ENCODE measurements at regions of chr19 and their contacts with region 1.

Region 1: DNA sequence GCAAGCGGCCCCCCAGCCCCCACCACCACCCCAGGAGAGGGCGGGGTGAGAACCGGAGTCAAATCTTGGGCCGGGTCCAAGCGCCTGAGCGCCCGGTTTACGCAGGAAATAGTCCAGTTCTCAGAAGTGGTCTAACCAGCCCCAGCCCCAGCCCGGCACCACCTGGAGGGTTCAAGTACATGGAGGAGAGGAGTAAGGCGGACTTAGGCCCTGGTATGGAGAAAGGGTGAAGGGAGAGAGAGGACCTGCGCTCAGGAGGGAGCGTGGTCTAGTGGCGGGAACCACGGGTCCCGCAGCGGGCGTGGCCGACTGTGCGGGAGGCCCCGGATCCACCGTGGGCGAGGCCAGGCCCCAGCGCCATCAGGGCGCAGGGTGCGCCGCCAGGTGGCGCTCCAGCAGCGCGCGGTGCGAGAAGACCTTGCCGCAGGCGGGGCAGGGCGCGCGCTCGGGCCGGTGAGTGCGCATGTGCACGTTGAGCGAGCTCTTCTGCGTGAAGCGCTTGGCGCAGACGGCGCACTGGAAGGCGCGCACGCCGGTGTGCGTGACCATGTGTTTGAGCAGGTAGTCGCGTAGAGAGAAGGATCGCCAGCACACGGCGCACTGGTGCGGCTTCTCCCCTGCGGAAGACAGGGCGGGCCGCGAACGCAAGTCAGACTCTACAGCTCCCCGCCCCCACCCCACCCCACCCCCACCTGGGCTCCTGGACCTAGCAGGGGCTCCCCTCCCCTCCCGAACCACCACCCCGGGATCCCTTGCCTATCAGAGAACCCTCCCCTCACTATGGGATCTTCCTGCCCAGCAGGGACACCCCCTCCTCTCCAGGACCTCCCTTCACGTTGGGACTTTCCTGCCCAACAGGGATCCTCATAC is 2.1 kb upstream of the SLC27A5 start:
- DNase-seq: peak; percentile 97
- ATAC-seq: peak; percentile 96
- H3K4me3 Mint-ChIP-seq: peak overlapping the region; percentile 78
- H3K27ac Mint-ChIP-seq: peak overlapping the region; percentile 88
- H3K4me1 Mint-ChIP-seq: peaks cover 45% of the 10 kb centered on the region
- H3K27me3 Mint-ChIP-seq: no peaks in the 10 kb centered on the region

Region 2: DNA sequence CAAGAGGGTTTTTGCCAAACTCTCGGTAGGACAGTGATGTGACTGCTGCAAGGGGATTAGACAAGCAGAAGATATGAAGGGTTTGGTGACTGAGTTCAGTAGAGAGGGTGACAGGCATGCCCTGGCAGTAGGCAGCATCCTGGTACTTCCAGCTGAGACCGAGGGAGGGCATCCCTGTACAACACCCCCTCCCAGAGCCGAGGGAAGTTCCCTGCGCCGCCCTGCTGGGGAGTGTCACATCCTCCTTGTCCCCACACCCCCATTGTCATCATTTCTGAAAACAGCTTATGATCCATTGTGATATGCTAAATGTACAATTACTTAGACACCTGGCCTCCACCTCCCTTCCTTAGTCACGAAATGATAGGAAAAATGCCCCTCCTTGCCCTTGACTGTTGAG is 270.6 kb before region 1 on chr19:
- CTCF ChIA-PET with region 1: no interaction called
- POLR2A ChIA-PET with region 1: no interaction called
- DNase-seq: no peak
- ATAC-seq: no peak
- H3K4me3 Mint-ChIP-seq: no peak overlapping the region
- H3K27ac Mint-ChIP-seq: no peak overlapping the region
- H3K4me1 Mint-ChIP-seq: no peaks in the 10 kb centered on the region
- H3K27me3 Mint-ChIP-seq: no peaks in the 10 kb centered on the region

Region 3: GRCh38 chr19:58380037-58380721 is 133.8 kb before region 1 on chr19:
- CTCF ChIA-PET with region 1: no interaction called
- POLR2A ChIA-PET with region 1: no interaction called
- DNase-seq: no peak
- ATAC-seq: no peak
- H3K4me3 Mint-ChIP-seq: peak overlapping the region; percentile 82
- H3K27ac Mint-ChIP-seq: peak overlapping the region; percentile 94
- H3K4me1 Mint-ChIP-seq: peaks cover 32% of the 10 kb centered on the region
- H3K27me3 Mint-ChIP-seq: no peaks in the 10 kb centered on the region

Region 4: GRCh38 chr19:58475714-58476497 is 38.0 kb before region 1 on chr19 and contains the start of gene ZNF446:
- CTCF ChIA-PET with region 1: interaction called, 12 read pairs
- POLR2A ChIA-PET with region 1: interaction called, 4 read pairs
- DNase-seq: peak; percentile 99
- ATAC-seq: peak; percentile 92
- H3K4me3 Mint-ChIP-seq: peak within 1 kb of the TSS; percentile 91
- H3K27ac Mint-ChIP-seq: peak within 1 kb of the TSS; percentile 100
- H3K4me1 Mint-ChIP-seq: peaks cover 26% of the 10 kb centered on the region
- H3K27me3 Mint-ChIP-seq: no peaks in the 10 kb centered on the region
- total RNA-seq, gene ZNF446: 6.9 to 7.8 TPM

Region 5: DNA sequence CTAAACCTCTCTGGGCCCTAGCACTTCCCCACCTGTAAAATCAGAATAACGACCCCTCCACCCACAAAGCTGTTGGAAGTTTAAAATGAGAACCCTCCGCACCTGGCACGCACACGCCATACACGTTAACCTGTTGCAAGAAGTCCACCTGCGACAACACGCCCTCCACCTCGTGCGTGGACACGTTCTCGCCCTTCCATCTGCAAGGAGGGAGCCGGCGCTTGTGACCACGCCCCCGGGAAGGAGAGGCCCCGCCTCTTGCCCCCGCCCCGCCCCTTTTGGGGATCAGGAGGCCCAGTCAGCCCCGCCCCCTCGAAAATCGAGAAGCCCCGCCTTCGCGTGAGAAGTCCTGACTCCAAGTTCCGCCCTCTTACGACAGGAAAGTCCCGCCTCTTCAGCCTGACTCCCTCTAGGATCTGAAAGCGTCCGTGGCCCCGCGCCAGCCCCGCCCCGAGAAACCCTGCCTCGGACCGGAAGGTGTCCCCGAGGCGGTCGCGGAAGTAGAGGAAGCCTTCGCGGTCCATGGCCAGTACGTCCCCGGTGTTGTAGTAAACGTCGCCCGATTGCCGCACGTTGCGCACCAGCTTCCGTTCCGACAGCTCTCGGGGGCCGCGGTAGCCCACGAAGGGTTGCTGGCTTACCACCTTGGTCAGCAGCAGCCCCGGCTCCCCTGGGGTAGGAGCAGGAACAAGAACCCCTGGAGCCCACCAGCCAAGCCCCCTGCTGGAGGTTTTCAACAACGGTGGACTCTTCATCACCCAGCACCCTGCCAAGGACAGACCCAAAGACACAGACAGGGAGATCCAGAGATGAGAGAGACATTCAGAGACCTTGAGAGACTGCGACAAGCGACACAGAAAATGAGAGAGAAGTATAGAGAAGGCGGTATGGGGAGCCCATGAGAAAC is 14.7 kb before region 1 on chr19:
- CTCF ChIA-PET with region 1: interaction called, 24 read pairs
- POLR2A ChIA-PET with region 1: interaction called, 11 read pairs
- DNase-seq: peak; percentile 99
- ATAC-seq: peak; percentile 97
- H3K4me3 Mint-ChIP-seq: peak overlapping the region; percentile 85
- H3K27ac Mint-ChIP-seq: peak overlapping the region; percentile 88
- H3K4me1 Mint-ChIP-seq: peaks cover 31% of the 10 kb centered on the region
- H3K27me3 Mint-ChIP-seq: no peaks in the 10 kb centered on the region

Region 6: DNA sequence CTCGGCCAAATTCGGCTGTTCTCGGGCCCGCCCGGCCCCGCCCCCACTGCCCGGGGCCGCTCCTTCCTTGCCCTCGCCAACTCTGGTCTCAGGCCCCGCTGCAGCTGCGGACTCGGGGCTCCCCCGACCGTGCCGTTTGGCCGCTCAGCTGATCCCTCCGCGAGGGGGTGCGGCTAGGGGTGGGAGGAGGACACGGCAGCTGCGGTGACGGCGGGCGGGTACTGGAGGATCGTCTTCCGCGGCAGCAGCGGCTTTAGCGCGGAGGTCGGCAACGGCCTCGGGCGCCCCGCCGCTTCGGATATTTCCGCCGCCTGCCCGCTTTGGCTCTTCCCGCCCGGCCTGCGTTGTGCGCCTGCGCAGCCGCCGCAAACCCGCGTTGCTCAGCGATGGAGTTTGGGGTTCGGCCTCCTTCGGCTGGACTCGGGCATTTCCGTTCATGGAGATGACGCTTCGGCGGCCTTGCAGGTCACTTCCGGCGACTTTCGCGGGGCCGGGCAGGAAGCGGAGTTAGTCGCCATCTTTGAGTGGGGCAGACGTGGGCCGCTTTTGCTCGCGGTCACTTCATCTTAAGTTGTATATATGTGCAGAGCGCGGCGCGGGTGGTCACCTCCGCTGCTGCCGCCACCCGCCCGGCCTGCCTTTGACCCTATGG is 44.8 kb after region 1 on chr19:
- CTCF ChIA-PET with region 1: interaction called, 49 read pairs
- POLR2A ChIA-PET with region 1: interaction called, 31 read pairs
- DNase-seq: peak; percentile 100
- ATAC-seq: peak; percentile 67
- H3K4me3 Mint-ChIP-seq: peak overlapping the region; percentile 96
- H3K27ac Mint-ChIP-seq: peak overlapping the region; percentile 99
- H3K4me1 Mint-ChIP-seq: peaks cover 69% of the 10 kb centered on the region
- H3K27me3 Mint-ChIP-seq: no peaks in the 10 kb centered on the region

Region 7: DNA sequence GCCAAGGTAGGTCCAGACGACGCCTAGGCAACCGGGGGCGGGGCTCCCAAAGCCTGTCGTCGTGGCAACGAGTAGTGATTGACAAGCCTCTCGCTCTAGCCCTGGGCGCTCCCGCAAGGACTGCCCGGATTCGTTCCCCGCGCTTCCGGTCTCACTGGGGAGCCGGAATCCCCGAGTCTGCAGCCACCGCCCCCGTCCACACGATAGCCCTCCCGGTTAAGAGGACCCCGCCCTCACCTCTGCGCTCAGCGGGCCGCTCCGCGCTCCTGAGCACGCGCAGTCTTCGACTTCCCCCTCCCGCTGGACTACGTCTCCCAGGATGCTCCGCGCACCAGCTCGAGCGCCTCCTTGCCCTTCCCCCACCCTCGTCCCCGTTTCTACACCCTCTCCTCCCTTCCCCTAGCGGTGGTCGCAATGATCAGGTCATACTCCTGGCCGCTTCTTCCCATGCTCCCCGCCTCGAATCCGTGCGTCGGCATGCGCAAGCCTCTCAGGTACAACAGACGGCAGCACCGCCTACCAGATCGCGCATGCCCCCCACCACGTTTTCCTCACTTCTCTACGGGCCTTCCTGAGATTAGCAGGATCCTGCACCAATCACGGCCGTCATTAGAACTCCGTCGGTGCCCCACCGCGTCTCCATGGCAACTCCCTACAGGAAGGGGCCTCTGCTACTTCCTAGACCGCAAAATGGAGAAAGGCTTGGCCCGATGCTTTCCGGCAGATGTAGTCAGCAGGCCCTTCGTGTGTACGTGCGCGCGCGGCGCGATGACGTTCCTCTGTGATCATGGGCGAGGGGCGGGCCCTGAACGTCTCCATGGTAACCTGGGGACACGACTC is 59.1 kb after region 1 on chr19 and contains the start of gene MZF1:
- CTCF ChIA-PET with region 1: interaction called, 94 read pairs
- POLR2A ChIA-PET with region 1: interaction called, 18 read pairs
- DNase-seq: peak; percentile 100
- ATAC-seq: peak; percentile 62
- H3K4me3 Mint-ChIP-seq: peak within 1 kb of the TSS; percentile 86
- H3K27ac Mint-ChIP-seq: peak within 1 kb of the TSS; percentile 99
- H3K4me1 Mint-ChIP-seq: peaks cover 43% of the 10 kb centered on the region
- H3K27me3 Mint-ChIP-seq: no peaks in the 10 kb centered on the region
- total RNA-seq, gene MZF1: 20.0 to 20.6 TPM

Region 8: DNA sequence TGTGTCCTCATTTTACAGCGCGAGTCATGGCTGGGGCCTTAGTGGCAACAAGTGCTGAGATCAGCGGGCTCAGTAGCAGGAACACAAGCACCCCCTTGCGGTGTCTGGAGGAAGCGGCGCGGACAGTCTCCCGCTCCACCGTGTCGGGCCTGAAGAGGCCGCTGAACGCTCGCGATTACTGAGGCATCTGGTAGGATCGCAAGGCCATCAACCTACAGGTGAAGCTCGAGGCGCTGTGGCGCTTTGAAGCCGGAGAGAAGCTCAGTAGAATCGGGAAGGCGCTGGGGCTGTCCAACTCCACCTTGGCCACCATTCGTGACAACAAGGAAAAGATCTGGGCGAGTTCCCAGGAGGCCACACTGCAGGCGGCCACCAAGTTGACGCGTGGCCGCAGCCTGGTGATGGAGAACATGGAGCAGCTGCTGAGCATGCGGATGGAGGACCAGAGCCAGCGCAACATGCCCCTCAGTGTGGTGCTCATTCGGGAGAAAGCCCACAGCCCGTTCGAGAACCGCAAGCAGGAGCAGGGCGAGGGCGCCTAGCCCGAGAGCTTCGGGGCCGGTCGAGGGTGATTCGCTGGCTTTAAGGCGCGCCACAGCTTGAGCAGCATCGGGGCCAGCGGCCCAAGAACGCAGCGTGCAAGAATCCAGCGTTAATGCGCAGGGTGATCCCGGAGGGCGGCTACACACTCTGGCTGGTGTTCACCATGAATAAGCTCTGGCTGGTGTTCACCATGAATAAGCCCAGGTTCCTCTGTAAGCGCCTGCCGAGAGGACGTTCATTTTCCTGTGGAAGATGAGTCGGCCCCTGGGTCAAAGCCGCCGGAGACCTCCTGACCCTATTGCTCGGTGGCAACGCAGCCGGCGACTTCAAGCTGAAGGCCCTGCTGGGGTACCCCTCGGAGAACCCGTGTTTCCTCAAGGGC is 67.6 kb after region 1 on chr19:
- CTCF ChIA-PET with region 1: interaction called, 94 read pairs
- POLR2A ChIA-PET with region 1: interaction called, 17 read pairs
- DNase-seq: peak; percentile 95
- ATAC-seq: peak; percentile 94
- H3K4me3 Mint-ChIP-seq: no peak overlapping the region
- H3K27ac Mint-ChIP-seq: peak overlapping the region; percentile 79
- H3K4me1 Mint-ChIP-seq: peaks cover 21% of the 10 kb centered on the region
- H3K27me3 Mint-ChIP-seq: no peaks in the 10 kb centered on the region